Activated CD8-positive, alpha-beta T cell treated with anti-CD3 and anti-CD28 coated beads for 36 hours (primary cell): ENCODE measurements at regions of chr16 and their contacts with region 1.

Region 1: DNA sequence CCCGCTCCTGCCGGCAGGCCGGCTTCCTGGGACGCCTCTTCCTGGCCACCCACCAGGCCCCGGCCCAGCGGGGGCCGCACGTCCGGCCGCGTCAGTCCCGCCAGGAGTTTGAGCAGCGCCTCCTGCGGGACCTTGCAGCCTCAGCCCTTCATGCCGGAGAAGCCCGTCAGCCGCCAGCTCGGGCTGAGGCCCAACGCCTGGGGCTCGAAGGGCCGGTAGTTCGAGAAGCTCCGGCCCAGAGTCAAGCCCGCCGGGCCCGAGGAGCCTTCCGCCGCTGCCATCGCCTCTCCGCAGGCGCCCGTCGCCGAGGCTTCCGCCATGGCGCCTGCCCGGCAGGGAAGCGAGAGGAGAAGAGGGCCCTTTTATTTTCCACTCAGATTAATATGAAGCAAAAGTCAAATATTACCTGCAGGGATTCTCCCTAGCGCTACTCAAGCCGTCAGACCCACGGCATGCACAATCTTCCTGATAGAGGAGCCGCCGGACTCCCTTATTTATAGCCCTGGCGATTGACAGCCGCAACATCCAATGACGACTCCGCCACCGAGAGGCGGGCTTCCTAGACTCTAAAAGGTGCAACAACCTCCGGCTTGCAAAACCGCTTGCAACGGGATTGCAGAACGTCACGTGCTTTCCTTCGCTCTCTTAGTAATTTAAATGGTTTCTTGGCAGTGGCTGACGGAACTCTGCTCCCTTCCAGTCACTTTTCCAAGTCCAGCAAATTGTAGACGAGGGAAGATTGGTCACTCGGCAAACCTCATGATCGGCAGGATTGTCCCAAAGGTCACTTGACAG is at the start of gene SEPHS2:
- DNase-seq: peak; percentile 100
- ATAC-seq: peak; percentile 97
- H3K4me3 Mint-ChIP-seq: peak within 1 kb of the TSS; percentile 93
- H3K27ac Mint-ChIP-seq: peak within 1 kb of the TSS; percentile 91
- H3K4me1 Mint-ChIP-seq: peaks cover 39% of the 10 kb centered on the region
- H3K27me3 Mint-ChIP-seq: no peaks in the 10 kb centered on the region
- CTCF ChIP-seq: peak; percentile 23
- total RNA-seq, gene SEPHS2: 51.8 to 54.0 TPM

Region 2: DNA sequence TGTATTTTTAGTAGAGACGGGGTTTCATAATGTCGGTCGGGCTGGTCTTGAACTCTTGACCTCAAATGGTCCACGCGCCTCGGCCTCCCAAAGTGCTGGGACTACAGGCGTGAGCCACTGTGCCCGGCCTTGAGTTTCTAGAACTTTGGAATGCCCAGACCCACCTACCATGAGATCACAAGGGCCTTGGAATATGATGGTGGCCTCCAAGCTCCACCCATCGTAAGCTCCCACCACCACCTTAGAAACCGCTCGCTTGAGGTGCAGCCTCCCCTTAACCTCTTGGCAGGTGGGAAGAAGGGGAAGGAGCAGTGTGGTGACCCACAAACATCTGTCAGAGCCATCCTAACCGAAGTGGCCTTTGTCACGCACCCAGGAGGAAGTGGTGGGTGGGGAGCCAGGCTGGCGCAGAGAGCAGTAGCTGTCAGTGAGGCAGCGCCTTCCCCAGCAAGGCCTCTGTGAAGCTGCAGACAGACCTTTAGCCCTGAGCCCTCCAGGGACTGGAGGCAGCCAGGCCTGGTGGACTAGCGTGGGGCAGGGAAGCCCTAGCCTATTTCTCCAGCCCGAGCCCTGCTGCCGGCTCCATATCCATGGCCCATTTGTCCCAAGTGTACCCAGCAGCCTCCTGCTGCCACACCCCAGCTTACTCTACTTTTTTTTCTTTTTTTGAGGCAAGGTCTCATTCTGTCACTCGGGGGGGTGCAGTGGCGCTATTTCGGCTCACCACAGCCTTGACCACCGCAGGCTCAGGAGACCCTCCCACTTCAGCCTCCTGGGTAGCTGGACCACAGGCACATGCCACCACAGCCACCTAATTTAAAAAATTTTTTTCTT is 13.2 kb after region 1 on chr16:
- CTCF ChIA-PET with region 1: interaction called, 49 read pairs
- POLR2A ChIA-PET with region 1: interaction called, 19 read pairs
- intact Hi-C with region 1: no loop called
- DNase-seq: peak; percentile 97
- ATAC-seq: peak; percentile 95
- H3K4me3 Mint-ChIP-seq: peak overlapping the region; percentile 62
- H3K27ac Mint-ChIP-seq: peak overlapping the region; percentile 98
- H3K4me1 Mint-ChIP-seq: peaks cover 67% of the 10 kb centered on the region
- H3K27me3 Mint-ChIP-seq: no peaks in the 10 kb centered on the region
- CTCF ChIP-seq: no peak

Region 3: DNA sequence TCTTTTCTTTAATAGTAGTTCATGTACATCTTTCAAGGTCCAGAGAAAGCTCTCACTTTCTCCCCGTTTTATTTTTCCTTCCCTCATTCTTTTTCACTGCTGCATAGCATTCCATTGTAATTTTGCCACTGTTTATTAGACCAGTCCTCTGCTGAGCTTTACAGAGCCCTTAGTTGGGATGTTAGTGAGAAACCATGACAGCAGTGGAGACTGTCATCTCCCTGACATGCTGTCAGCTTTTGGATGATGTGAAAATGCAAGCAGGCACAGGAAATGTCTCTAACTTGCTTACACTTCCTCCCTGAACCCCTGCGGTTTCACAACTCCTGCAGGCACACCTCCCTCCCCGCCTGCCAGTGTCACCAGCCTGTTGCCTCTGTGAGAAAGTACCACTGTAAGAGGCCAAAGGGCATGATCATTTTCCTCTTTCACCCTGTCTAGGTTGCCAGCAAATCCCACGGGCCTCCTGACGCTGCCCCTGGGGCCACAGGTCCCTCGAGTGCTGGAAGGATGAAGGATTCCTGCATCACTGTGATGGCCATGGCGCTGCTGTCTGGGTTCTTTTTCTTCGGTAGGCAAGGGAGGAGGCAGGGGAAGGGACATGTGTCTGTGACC is 26.8 kb after region 1 on chr16 and contains the start of gene ITGAL:
- CTCF ChIA-PET with region 1: interaction called, 52 read pairs
- POLR2A ChIA-PET with region 1: interaction called, 280 read pairs
- intact Hi-C with region 1: loop called (anchors 2 kb)
- DNase-seq: peak; percentile 94
- ATAC-seq: peak; percentile 69
- H3K4me3 Mint-ChIP-seq: peak within 1 kb of the TSS; percentile 100
- H3K27ac Mint-ChIP-seq: peak within 1 kb of the TSS; percentile 96
- H3K4me1 Mint-ChIP-seq: peaks cover 54% of the 10 kb centered on the region
- H3K27me3 Mint-ChIP-seq: no peaks in the 10 kb centered on the region
- CTCF ChIP-seq: no peak
- total RNA-seq, gene ITGAL: 274 to 285 TPM

Region 4: GRCh38 chr16:30482366-30482765 is 36.8 kb after region 1 on chr16:
- CTCF ChIA-PET with region 1: interaction called, 17 read pairs
- POLR2A ChIA-PET with region 1: interaction called, 280 read pairs
- intact Hi-C with region 1: loop called (anchors 5 kb)
- DNase-seq: peak; percentile 35
- ATAC-seq: peak; percentile 76
- H3K4me3 Mint-ChIP-seq: no peak overlapping the region
- H3K27ac Mint-ChIP-seq: peak overlapping the region; percentile 75
- H3K4me1 Mint-ChIP-seq: peaks cover 48% of the 10 kb centered on the region
- H3K27me3 Mint-ChIP-seq: no peaks in the 10 kb centered on the region
- CTCF ChIP-seq: peak; percentile 32

Region 5: DNA sequence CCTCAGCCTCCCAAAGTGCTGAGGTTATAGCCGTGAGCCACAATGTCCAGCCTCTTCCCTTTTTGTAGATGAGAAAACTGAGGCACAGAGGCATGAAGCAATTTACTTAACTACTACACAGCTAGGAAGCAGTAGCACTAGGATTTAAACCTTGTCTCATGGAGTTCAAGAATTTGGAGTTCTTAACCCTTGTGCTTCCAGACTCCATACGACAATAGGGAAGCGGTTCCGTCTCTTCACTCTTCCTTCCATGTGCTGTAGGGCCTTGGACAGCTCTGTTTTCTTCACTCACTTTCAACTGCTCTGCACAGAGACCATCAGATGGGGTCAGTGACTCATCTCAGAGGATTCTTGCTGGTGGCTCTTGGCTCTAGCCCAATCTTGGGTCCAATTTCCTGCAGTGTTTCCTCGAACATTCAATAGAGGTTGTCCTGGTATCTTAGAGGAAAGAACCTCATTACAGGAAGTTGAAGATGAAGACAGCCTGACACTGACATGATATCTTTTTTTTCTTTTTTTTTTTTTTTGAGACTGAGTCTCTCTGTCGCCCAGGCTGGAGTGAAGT is 46.2 kb after region 1 on chr16:
- CTCF ChIA-PET with region 1: interaction called, 4 read pairs
- POLR2A ChIA-PET with region 1: interaction called, 8 read pairs
- intact Hi-C with region 1: loop called (anchors 5 kb)
- DNase-seq: peak; percentile 24
- ATAC-seq: peak; percentile 64
- H3K4me3 Mint-ChIP-seq: no peak overlapping the region
- H3K27ac Mint-ChIP-seq: peak overlapping the region; percentile 76
- H3K4me1 Mint-ChIP-seq: peaks cover 39% of the 10 kb centered on the region
- H3K27me3 Mint-ChIP-seq: no peaks in the 10 kb centered on the region
- CTCF ChIP-seq: no peak

Region 6: DNA sequence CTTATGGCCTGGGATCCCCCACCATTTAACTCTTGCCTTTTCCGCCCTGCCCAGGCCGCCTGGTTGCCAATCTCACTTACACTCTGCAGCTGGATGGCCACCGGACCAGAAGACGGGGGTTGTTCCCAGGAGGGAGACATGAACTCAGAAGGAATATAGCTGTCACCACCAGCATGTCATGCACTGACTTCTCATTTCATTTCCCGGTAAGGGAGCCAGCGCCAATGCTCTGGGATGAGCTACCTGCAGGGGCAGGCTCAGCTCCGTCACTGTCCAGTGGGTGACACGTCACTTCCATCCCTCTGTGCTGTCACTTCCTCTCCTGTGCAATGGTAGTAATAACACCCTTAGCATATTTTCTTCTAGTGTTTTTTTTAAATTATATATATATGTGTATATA is 53.7 kb after region 1 on chr16:
- CTCF ChIA-PET with region 1: interaction called, 12 read pairs
- POLR2A ChIA-PET with region 1: interaction called, 8 read pairs
- intact Hi-C with region 1: no loop called
- DNase-seq: no peak
- ATAC-seq: no peak
- H3K4me3 Mint-ChIP-seq: no peak overlapping the region
- H3K27ac Mint-ChIP-seq: peak overlapping the region; percentile 55
- H3K4me1 Mint-ChIP-seq: peaks cover 9% of the 10 kb centered on the region
- H3K27me3 Mint-ChIP-seq: no peaks in the 10 kb centered on the region
- CTCF ChIP-seq: no peak

Region 7: DNA sequence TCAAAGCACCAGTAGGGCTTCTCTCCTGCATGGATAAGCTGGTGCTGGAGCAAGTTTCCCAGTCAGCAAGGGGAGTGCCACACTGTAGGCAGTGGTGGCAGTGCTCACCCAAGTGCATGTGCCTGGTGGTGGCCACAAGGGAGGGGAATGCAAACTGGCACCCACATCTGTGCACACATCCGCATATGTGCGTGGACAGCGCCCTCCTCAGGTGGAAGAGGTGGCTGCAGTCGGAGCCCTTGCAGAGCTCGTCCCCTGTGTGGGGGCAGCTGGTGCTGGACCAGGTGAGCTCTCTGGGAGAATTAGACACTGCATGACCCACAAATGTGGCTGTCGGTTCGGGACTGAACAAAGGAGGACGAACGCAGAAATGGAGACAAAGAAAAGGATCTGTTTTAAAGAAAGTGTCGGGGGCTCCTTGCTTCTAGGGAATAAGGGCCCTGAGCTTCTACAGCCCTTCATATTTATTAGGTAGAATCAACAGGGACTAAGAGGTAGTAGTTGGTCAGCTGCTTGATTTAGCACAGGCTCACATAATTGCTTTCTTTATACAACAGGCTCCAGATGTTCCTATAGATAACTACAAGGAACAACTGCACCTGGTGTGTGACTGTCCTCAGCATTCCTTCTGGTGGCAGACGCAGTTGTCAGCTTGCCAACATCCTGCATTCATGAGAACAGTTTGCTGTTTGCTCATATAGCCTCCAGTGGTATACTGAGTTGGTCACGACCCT is 169.9 kb after region 1 on chr16:
- CTCF ChIA-PET with region 1: interaction called, 14 read pairs
- POLR2A ChIA-PET with region 1: no interaction called
- intact Hi-C with region 1: no loop called
- DNase-seq: peak; percentile 94
- ATAC-seq: peak; percentile 90
- H3K4me3 Mint-ChIP-seq: no peak overlapping the region
- H3K27ac Mint-ChIP-seq: no peak overlapping the region
- H3K4me1 Mint-ChIP-seq: peaks cover 1% of the 10 kb centered on the region
- H3K27me3 Mint-ChIP-seq: no peaks in the 10 kb centered on the region
- CTCF ChIP-seq: peak; percentile 90